Spleen (tissue), 13 donors: ENCODE measurements at regions of chr13 and their contacts with region 1.

Region 1: DNA sequence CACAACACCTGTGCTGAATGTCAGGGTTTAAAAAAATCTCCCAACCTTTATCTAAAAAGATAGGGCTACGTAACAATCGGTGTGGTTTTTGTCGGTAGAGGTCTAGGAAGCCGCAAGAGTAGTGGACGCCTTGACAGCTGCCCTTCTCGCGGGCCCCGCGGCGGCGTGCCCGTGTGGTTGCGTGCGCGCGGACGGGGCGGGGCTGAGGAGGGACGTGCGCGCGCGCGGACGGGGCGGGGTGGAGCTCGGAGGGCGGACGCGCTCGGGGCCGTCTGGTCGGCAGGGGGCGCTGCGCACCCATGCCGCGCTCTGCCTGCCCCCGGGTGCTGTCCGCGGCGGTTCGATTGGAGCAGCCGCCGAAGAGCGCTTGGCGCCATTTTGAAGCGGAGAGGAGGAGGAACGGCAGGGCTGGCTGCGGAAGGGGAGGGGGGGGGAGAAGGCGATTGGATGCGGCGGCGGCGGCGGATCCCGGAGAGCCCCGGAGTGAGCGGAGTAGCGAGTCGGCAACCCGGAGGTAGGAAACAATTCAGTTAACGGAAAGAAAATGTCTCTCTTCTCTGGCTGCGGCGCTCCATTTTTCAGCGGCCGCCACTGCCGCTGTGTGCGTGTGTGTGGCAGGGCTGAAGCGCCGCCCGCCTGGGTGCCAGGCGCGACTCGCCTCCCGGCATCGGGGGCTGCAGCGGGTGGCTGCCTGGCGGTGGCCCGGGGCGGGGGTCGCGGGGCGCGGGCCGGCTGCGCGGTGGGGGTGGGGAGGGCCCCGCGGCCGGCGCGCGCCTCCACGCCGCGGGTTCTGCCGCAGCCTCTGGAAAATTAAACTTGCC is at the start of gene PDS5B:
- DNase-seq: peak; percentile 99
- H3K4me3 ChIP-seq: peak within 1 kb of the TSS; percentile 59 to 92 (median 71)
- H3K27ac ChIP-seq: peak within 1 kb of the TSS; percentile 78 to 96 (median 95)
- H3K4me1 ChIP-seq: peaks cover 23 to 49% (median 37%) of the 10 kb centered on the region in 6 donors
- H3K27me3 ChIP-seq: no peaks in the 10 kb centered on the region
- CTCF ChIP-seq: peak; percentile 81 to 100 (median 98)
- POLR2A ChIP-seq: peak in 1 of 3 donors; percentile 43
- total RNA-seq, gene PDS5B: 48.7 to 65.9 (median 55.7) TPM

Region 2: GRCh38 chr13:32639502-32640105 is 53.3 kb after region 1 on chr13:
- intact Hi-C with region 1: loop called (anchors 5 kb)
- DNase-seq: no peak
- H3K4me3 ChIP-seq: no peak overlapping the region
- H3K27ac ChIP-seq: no peak overlapping the region
- H3K4me1 ChIP-seq: peaks cover 0 to 72% (median 29%) of the 10 kb centered on the region in 6 donors
- H3K27me3 ChIP-seq: no peaks in the 10 kb centered on the region
- CTCF ChIP-seq: peak; percentile 34 to 84 (median 70)
- POLR2A ChIP-seq: no peak